ENCODE measurements at regions of chr22 and their contacts with region 1.

Region 1: DNA sequence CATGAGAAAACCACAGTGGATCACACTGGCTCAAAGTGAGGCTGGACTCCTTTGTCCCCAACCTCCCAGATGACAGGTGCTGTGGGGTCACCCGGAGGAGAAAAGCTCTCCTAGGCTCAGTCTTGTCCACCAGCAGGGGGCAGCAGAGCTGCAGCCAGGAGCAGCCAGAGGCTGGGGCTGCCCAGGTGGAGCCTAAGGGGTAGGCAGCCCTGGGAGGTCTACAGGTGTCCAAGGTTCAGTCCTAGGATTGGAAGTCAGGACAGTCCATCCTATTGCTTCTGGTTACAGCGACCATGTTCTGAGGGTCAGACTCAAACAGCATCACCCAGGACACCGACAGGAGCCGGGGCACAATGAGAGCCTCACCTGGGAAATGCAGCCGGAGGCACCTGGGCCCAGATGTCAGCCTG is 77.6 kb upstream of the IGLL5 start:
- DNase-seq: peak; percentile 76 to 82 (median 76)
- H3K4me3 ChIP-seq: no peak overlapping the region
- H3K4me3 Mint-ChIP-seq: peak overlapping the region in 4 of 8 donors; percentile 12 to 53 (median 44)
- H3K27ac ChIP-seq: no peak overlapping the region
- H3K27ac Mint-ChIP-seq: peak overlapping the region in 6 of 7 donors; percentile 67 to 91 (median 80)
- H3K4me1 ChIP-seq: peaks cover 26% of the 10 kb centered on the region
- H3K4me1 Mint-ChIP-seq: peaks cover 40 to 79% (median 57%) of the 10 kb centered on the region in 4 donors
- H3K27me3 ChIP-seq: no peaks in the 10 kb centered on the region
- H3K27me3 Mint-ChIP-seq: no peaks in the 10 kb centered on the region

Region 2: GRCh38 chr22:22748297-22748743 is 61.7 kb before region 1 on chr22:
- CTCF ChIA-PET with region 1: interaction called, 118 read pairs
- POLR2A ChIA-PET with region 1: interaction called, 67 read pairs
- intact Hi-C with region 1: no loop called
- DNase-seq: peak in 4 of 5 donors; percentile 19 to 33 (median 24)
- H3K4me3 ChIP-seq: no peak overlapping the region
- H3K4me3 Mint-ChIP-seq: no peak overlapping the region
- H3K27ac ChIP-seq: no peak overlapping the region
- H3K27ac Mint-ChIP-seq: peak overlapping the region in 3 of 7 donors; percentile 17 to 74 (median 64)
- H3K4me1 ChIP-seq: peaks cover 11% of the 10 kb centered on the region
- H3K4me1 Mint-ChIP-seq: peaks cover 10 to 31% (median 24%) of the 10 kb centered on the region in 4 donors
- H3K27me3 ChIP-seq: no peaks in the 10 kb centered on the region
- H3K27me3 Mint-ChIP-seq: peaks cover 0 to 4% of the 10 kb centered on the region in 2 donors

Region 3: GRCh38 chr22:22830193-22830592 is 20.2 kb after region 1 on chr22:
- CTCF ChIA-PET with region 1: interaction called, 12 read pairs
- POLR2A ChIA-PET with region 1: interaction called, 4 read pairs
- intact Hi-C with region 1: no loop called
- DNase-seq: no peak
- H3K4me3 ChIP-seq: no peak overlapping the region
- H3K4me3 Mint-ChIP-seq: no peak overlapping the region
- H3K27ac ChIP-seq: no peak overlapping the region
- H3K27ac Mint-ChIP-seq: no peak overlapping the region
- H3K4me1 ChIP-seq: peaks cover 4% of the 10 kb centered on the region
- H3K4me1 Mint-ChIP-seq: peaks cover 11 to 21% (median 16%) of the 10 kb centered on the region in 4 donors
- H3K27me3 ChIP-seq: no peaks in the 10 kb centered on the region
- H3K27me3 Mint-ChIP-seq: no peaks in the 10 kb centered on the region

Region 4: GRCh38 chr22:22870577-22871404 is 60.8 kb after region 1 on chr22:
- CTCF ChIA-PET with region 1: interaction called, 48 read pairs
- POLR2A ChIA-PET with region 1: interaction called, 11 read pairs
- intact Hi-C with region 1: no loop called
- DNase-seq: no peak
- H3K4me3 ChIP-seq: no peak overlapping the region
- H3K4me3 Mint-ChIP-seq: no peak overlapping the region
- H3K27ac ChIP-seq: no peak overlapping the region
- H3K27ac Mint-ChIP-seq: peak overlapping the region in 3 of 7 donors; percentile 29 to 72 (median 63)
- H3K4me1 ChIP-seq: peaks cover 13% of the 10 kb centered on the region
- H3K4me1 Mint-ChIP-seq: peaks cover 12 to 29% (median 15%) of the 10 kb centered on the region in 4 donors
- H3K27me3 ChIP-seq: no peaks in the 10 kb centered on the region
- H3K27me3 Mint-ChIP-seq: no peaks in the 10 kb centered on the region

Region 5: DNA sequence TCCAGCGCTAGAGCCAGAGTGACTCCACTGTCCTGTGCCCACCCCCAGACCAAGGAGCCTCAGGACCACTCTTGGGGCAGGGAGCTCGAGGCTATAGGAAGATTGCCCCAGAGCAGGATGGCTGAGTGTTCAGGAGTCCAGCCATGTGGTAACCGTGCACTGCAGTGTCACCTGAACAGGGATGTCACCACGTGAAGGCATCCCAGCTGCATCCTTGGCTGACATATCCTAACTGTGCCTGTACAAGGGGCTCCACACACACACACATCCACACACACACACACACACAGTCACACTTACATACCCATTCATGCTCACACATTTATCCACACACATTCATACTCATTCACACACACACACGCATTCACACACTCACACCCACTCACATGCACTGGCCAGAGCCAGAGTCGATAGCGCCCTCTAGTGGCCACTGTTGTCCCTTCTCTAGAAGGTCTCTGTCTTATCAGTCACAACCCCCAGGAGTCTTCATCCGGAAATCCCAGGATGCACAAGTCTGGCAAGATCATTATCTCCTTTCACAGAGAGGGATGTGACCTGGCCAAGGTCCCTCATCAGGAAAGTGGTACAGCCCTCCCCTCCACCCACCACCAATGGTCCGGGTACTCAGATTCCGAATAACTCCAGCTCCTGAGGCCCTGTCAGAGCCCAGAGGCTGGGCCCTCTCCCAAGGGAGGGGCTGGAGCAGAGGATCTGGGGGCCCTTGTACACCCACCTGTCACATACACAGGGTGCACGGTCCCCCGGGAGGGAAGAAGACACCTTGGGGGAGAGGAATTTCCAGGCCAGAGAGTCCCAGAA is 132.7 kb after region 1 on chr22:
- CTCF ChIA-PET with region 1: interaction called, 7 read pairs
- POLR2A ChIA-PET with region 1: no interaction called
- intact Hi-C with region 1: loop called (anchors 1 kb)
- DNase-seq: peak; percentile 42 to 72 (median 62)
- H3K4me3 ChIP-seq: no peak overlapping the region
- H3K4me3 Mint-ChIP-seq: no peak overlapping the region
- H3K27ac ChIP-seq: no peak overlapping the region
- H3K27ac Mint-ChIP-seq: no peak overlapping the region
- H3K4me1 ChIP-seq: peaks cover 5% of the 10 kb centered on the region
- H3K4me1 Mint-ChIP-seq: peaks cover 2 to 5% (median 4%) of the 10 kb centered on the region in 4 donors
- H3K27me3 ChIP-seq: no peaks in the 10 kb centered on the region
- H3K27me3 Mint-ChIP-seq: peaks cover 1 to 3% of the 10 kb centered on the region in 2 donors